ENCODE measurements at regions of chr6 and their contacts with region 1.

Region 1: DNA sequence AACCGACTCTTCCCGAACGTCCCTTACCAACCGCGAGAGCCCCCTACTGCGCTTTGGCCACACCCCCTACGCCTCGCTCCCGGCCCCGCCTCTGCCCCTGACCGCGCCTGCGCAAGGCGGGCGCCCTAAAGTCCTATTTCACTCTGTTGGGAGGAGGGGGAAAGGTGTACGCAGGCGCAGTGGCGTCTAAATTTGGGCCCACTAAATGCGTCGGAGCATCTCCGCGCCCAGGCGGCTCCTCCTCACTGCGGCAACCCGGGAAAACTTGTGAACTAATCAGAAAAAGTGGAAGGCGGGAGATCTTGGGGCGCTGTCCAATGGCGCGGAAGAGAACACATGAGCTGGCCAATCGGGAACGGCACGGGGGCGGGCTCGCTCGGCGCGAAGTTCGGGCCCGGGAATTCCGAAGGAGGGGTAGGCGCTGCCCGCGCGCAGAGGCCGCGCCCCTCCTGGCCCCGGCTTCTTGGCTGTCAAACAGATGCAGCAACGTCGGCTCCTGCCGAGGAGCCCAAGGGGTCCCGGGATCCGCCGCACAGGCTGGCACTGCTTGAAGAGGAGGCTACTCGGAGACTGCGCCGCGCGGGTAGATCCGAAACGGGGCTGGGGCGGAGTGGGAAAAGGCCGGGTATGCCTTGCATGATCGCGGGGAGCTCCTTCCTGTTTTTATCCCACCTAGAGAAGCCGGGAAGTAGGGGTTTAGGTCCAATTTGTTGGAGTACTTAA is at the start of gene TCF19:
- DNase-seq: peak; percentile 96 to 100
- H3K4me3 ChIP-seq: peak within 1 kb of the TSS; percentile 89
- H3K27ac ChIP-seq: no peak within 1 kb of the TSS
- H3K4me1 ChIP-seq: peaks cover 16% of the 10 kb centered on the region
- H3K27me3 ChIP-seq: no peaks in the 10 kb centered on the region
- CTCF ChIP-seq: no peak
- total RNA-seq, gene TCF19: 19.0 and 26.0 TPM in 2 replicates

Region 2: GRCh38 chr6:31042806-31043205 is 115.5 kb before region 1 on chr6:
- CTCF ChIA-PET with region 1: interaction called, 19 read pairs
- POLR2A ChIA-PET with region 1: no interaction called
- intact Hi-C with region 1: no loop called
- DNase-seq: peak; percentile 54 to 61
- H3K4me3 ChIP-seq: no peak overlapping the region
- H3K27ac ChIP-seq: no peak overlapping the region
- H3K4me1 ChIP-seq: peaks cover 9% of the 10 kb centered on the region
- H3K27me3 ChIP-seq: no peaks in the 10 kb centered on the region
- CTCF ChIP-seq: peak; percentile 75

Region 3: DNA sequence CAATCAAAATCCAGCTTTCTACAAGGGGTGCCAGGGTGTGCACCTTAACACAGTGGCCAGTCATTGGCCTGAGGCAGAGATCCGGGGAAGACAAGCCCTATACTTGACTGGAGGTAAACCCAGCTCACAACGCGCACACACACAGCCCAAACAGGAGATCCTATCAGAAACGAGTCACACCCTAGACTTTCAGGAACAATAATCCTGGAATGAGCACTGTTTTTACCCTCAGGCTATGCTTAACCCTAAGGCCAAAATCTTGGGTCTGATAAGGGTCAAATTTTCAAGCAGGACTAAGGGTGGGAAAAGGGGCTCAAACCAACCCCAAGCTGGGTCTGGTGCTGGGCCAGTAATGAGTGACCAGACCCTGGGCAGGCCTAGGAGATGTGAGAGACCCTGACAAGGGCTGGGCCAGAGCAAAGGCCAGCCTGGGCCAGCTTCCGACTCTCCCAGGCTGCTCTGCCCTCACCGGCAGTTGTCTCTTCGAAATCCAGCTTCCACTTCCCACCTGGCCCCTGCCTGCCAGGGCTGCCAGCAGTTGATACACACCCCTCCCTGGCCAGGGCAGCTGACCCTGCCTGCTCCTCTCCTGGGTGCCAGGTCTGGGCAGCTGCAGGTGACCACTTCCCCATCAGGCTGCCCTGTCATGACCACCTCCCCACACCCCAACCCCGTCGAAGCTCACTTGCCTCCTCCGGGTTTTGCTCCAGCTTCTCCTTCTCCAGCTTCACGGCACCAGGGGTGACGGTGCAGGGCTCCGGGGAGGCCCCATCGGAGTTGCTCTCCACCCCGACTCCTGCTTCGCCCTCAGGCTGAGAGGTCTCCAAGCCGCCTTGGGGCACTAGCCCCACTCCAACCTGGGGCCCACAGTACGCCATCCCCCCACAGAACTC is 11.5 kb after region 1 on chr6:
- CTCF ChIA-PET with region 1: no interaction called
- POLR2A ChIA-PET with region 1: interaction called, 11 read pairs
- intact Hi-C with region 1: loop called (anchors 1 kb)
- DNase-seq: peak; percentile 82 to 85
- H3K4me3 ChIP-seq: no peak overlapping the region
- H3K27ac ChIP-seq: no peak overlapping the region
- H3K4me1 ChIP-seq: peaks cover 19% of the 10 kb centered on the region
- H3K27me3 ChIP-seq: no peaks in the 10 kb centered on the region
- CTCF ChIP-seq: no peak

Region 4: GRCh38 chr6:31246050-31246521 is 87.8 kb after region 1 on chr6:
- CTCF ChIA-PET with region 1: no interaction called
- POLR2A ChIA-PET with region 1: no interaction called
- intact Hi-C with region 1: no loop called
- DNase-seq: peak; percentile 68 to 98
- H3K4me3 ChIP-seq: no peak overlapping the region
- H3K27ac ChIP-seq: peak overlapping the region; percentile 55
- H3K4me1 ChIP-seq: peaks cover 15% of the 10 kb centered on the region
- H3K27me3 ChIP-seq: no peaks in the 10 kb centered on the region
- CTCF ChIP-seq: no peak